Prostate gland (tissue), 2 donors: ENCODE measurements at regions of chr20 and their contacts with region 1.

Region 1: GRCh38 chr20:57346477-57346876 is 4.6 kb upstream of the RAE1 start:
- DNase-seq: peak; percentile 73
- H3K4me3 ChIP-seq: no peak overlapping the region
- H3K27ac ChIP-seq: no peak overlapping the region
- H3K4me1 ChIP-seq: no peaks in the 10 kb centered on the region
- H3K27me3 ChIP-seq: no peaks in the 10 kb centered on the region
- CTCF ChIP-seq: peak; percentile 23 to 82 (median 72)
- POLR2A ChIP-seq: no peak

Region 2: DNA sequence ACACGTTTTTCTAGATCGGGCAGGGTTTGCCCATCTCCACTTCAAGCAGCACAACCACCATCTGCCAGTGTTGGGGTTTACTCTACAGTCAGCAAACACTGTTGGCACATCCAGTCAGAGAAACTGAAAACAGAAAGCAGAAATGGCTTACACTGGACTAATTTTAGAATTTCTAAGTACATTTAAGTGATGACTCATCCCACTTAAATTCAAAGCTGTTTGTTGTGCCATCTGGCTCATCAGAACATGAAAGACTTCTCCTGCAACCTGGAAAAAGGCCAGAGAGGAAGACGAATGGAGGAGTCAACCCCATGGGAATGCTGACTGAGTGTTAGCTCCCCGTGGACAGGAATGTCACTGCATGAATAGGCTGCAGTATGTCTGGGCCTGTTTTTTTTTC is 791.6 kb before region 1 on chr20:
- intact Hi-C with region 1: loop called (anchors 5 kb)
- DNase-seq: peak; percentile 43
- H3K4me3 ChIP-seq: no peak overlapping the region
- H3K27ac ChIP-seq: no peak overlapping the region
- H3K4me1 ChIP-seq: no peaks in the 10 kb centered on the region
- H3K27me3 ChIP-seq: no peaks in the 10 kb centered on the region
- CTCF ChIP-seq: peak in 1 of 4 experiments; percentile 33
- POLR2A ChIP-seq: no peak

Region 3: GRCh38 chr20:57089691-57090150 is 256.8 kb before region 1 on chr20:
- intact Hi-C with region 1: loop called (anchors 2 kb)
- DNase-seq: peak; percentile 62
- H3K4me3 ChIP-seq: no peak overlapping the region
- H3K27ac ChIP-seq: no peak overlapping the region
- H3K4me1 ChIP-seq: no peaks in the 10 kb centered on the region
- H3K27me3 ChIP-seq: no peaks in the 10 kb centered on the region
- CTCF ChIP-seq: peak; percentile 92 to 95 (median 94)
- POLR2A ChIP-seq: no peak